ENCODE measurements at regions of chr9 and their contacts with region 1.

Region 1: DNA sequence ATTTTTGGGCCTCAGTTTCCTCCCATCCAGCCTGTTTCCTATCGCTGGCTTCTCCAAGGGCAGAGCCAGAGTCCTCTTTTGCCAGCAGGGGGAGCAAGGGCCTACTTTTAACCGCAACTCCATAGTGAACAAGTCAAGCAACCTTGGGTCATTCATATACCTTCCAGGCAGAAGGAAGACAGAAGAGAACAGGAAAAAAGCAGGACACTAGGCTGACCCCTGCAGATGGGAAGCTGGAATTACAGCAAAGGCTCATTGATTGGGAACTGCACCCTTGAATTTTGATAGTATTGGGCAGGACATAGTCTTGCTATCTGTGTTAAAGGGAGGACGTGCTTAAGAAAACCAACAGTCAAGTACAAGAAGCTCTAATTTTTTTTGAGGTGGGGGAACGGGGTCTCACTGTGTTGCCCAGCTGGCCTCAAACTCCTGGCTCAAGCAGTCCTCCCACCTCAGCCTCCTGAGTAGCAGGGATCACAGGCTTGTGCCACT is 30.1 kb downstream of the QRFP start:
- DNase-seq: peak; percentile 82
- H3K4me3 ChIP-seq: no peak overlapping the region
- H3K27ac ChIP-seq: peak overlapping the region in 3 of 4 donors; percentile 50 to 95 (median 89)
- H3K4me1 ChIP-seq: peaks cover 0 to 98% (median 89%) of the 10 kb centered on the region in 4 donors
- H3K27me3 ChIP-seq: no peaks in the 10 kb centered on the region
- CTCF ChIP-seq: peak in 3 of 4 experiments; percentile 79 to 87 (median 86)
- EP300 ChIP-seq: no peak
- POLR2A ChIP-seq: no peak

Region 2: DNA sequence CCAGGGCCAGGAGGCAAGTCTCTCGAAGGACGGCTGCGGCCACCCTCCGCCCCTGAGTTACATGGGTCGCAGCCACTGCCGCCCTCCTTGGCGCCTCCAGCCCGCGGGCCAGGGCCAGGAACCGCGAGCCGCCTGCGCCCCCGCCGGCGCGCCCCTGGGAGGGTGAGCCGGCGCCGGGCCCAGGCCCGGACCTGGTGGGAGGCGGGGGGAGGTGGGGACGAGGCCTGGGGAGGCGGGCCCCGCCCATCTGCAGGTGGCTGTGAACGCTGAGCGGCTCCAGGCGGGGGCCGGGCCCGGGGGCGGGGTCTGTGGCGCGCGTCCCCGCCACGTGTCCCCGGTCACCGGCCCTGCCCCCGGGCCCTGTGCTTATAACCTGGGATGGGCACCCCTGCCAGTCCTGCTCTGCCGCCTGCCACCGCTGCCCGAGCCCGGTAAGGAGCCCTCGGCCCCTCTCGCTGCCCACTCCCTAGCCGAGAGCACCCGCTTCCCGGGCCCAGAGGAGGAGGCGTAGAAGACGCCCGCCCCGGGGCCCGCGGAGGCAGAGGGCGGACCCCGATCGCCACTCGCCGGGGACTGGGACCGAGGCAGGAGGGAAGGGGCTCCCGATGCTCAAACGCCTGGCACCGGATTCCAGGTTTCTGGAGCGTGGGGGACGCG is 421.8 kb before region 1 on chr9 and contains the start of gene ASS1:
- intact Hi-C with region 1: loop called (anchors 10 kb)
- DNase-seq: peak; percentile 85
- H3K4me3 ChIP-seq: peak within 1 kb of the TSS; percentile 45 to 63 (median 56)
- H3K27ac ChIP-seq: peak within 1 kb of the TSS; percentile 80 to 94 (median 91)
- H3K4me1 ChIP-seq: peaks cover 0 to 51% (median 37%) of the 10 kb centered on the region in 4 donors
- H3K27me3 ChIP-seq: no peaks in the 10 kb centered on the region
- CTCF ChIP-seq: no peak
- EP300 ChIP-seq: no peak
- POLR2A ChIP-seq: peak in 1 of 2 donors; percentile 31
- total RNA-seq, gene ASS1: 65.8 to 84.2 (median 76.5) TPM

Region 3: DNA sequence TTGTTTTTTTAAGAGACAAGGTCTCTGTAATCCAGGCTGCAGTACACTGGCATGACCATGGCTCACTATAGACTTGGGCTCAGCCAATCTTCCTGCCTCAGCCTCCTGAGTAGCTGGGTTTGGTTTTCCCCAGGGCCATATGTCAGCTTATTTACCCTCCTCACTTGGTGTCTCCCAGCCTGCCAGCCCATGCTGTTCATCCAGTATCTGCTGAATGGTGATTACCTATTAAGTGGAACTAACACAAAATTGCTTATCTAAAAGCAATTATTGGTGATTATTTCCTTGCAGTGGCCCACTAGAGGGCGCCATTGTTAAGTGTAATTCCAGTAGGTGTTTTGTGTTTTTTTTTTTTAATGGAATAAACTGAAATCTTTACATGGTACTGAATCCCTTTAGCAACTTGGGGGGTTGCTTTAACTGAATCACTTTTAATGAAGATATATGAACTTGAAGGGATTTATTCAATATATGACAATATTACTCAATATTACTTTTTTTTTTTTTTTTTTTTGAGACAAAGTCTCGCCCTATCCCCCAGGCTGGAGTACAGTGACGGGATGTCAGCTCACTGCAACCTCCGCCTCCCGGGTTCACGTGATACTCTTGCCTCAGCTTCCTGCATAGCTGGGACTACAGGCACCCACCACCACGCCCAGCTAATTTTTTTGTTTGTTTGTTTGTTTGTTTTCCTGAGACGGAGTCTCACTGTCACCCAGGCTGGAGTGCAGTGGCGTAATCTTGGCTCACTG is 159.1 kb before region 1 on chr9:
- intact Hi-C with region 1: loop called (anchors 1 kb)
- DNase-seq: peak; percentile 77
- H3K4me3 ChIP-seq: no peak overlapping the region
- H3K27ac ChIP-seq: no peak overlapping the region
- H3K4me1 ChIP-seq: peaks cover 0 to 6% (median 5%) of the 10 kb centered on the region in 4 donors
- H3K27me3 ChIP-seq: no peaks in the 10 kb centered on the region
- CTCF ChIP-seq: peak; percentile 42 to 73 (median 64)
- EP300 ChIP-seq: no peak
- POLR2A ChIP-seq: no peak

Region 4: GRCh38 chr9:130712564-130713285 is 153.8 kb before region 1 on chr9:
- intact Hi-C with region 1: loop called (anchors 1 kb)
- DNase-seq: peak; percentile 100
- H3K4me3 ChIP-seq: peak overlapping the region; percentile 55 to 100 (median 98)
- H3K27ac ChIP-seq: peak overlapping the region; percentile 97 to 99 (median 99)
- H3K4me1 ChIP-seq: peaks cover 0 to 43% (median 34%) of the 10 kb centered on the region in 4 donors
- H3K27me3 ChIP-seq: no peaks in the 10 kb centered on the region
- CTCF ChIP-seq: no peak
- EP300 ChIP-seq: no peak
- POLR2A ChIP-seq: peak; percentile 46 to 49

Region 5: GRCh38 chr9:130770679-130771442 is 95.7 kb before region 1 on chr9:
- intact Hi-C with region 1: loop called (anchors 1 kb)
- DNase-seq: no peak
- H3K4me3 ChIP-seq: no peak overlapping the region
- H3K27ac ChIP-seq: peak overlapping the region in 3 of 4 donors; percentile 42 to 51 (median 46)
- H3K4me1 ChIP-seq: peaks cover 0 to 60% (median 34%) of the 10 kb centered on the region in 4 donors
- H3K27me3 ChIP-seq: no peaks in the 10 kb centered on the region
- CTCF ChIP-seq: peak in 3 of 4 experiments; percentile 70 to 82 (median 74)
- EP300 ChIP-seq: no peak
- POLR2A ChIP-seq: no peak

Region 6: DNA sequence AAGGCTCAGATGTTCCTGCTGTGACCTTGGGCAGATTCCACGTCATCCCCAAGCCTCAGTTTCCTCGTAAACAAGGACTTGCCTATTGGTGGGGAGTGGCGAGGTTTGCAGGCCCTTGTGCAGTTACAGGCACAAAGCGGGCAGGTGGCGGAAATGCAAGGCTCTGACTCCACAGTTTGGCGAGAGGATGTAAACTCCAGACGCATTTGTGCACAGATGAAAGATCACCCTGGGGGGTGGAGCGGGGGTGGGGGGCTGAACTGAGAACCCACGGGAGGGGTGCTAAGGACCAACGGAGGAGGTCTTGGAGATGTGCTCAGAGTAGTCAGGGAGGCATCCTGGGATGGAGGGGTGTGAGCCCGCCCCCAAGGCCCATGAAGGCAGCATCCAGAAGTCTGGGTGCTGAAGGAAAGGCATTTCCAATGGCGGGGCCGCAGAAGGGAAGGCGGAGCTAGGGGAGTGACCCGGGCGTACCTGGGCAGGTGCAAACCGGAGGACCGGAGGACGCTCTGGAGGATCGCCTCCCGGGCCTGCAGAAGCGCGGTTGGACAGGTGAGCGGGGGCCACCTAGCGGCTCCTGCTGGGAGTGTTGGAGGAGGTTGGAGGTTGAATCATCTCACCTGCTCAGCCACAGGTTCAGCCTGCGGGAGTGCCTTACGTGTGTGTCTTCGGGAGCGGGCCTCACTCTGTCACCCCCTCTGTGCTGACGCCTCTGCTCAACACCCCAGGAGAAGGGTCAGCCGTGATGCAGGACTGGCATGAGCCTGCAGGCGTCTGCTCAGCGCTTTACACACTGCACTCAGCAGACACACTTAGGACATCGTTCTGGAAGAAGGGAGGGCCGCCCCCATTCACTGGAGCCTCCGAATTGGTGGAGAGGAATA is 74.4 kb after region 1 on chr9:
- intact Hi-C with region 1: loop called (anchors 5 kb)
- DNase-seq: peak; percentile 79
- H3K4me3 ChIP-seq: no peak overlapping the region
- H3K27ac ChIP-seq: no peak overlapping the region
- H3K4me1 ChIP-seq: peaks cover 0 to 42% (median 29%) of the 10 kb centered on the region in 4 donors
- H3K27me3 ChIP-seq: peaks cover 32 to 62% (median 60%) of the 10 kb centered on the region in 3 donors
- CTCF ChIP-seq: peak; percentile 80 to 86 (median 82)
- EP300 ChIP-seq: no peak
- POLR2A ChIP-seq: no peak

Region 7: GRCh38 chr9:131423171-131423581 is 556.7 kb after region 1 on chr9:
- intact Hi-C with region 1: no loop called
- DNase-seq: peak; percentile 83
- H3K4me3 ChIP-seq: peak overlapping the region in 2 of 4 donors; percentile 9 to 10
- H3K27ac ChIP-seq: peak overlapping the region; percentile 68 to 84 (median 76)
- H3K4me1 ChIP-seq: peaks cover 0 to 71% (median 62%) of the 10 kb centered on the region in 4 donors
- H3K27me3 ChIP-seq: no peaks in the 10 kb centered on the region
- CTCF ChIP-seq: no peak
- EP300 ChIP-seq: no peak
- POLR2A ChIP-seq: no peak

Measured in sigmoid colon (tissue), 7 donors.